ENCODE measurements at regions of chr17 and their contacts with region 1.

Region 1: DNA sequence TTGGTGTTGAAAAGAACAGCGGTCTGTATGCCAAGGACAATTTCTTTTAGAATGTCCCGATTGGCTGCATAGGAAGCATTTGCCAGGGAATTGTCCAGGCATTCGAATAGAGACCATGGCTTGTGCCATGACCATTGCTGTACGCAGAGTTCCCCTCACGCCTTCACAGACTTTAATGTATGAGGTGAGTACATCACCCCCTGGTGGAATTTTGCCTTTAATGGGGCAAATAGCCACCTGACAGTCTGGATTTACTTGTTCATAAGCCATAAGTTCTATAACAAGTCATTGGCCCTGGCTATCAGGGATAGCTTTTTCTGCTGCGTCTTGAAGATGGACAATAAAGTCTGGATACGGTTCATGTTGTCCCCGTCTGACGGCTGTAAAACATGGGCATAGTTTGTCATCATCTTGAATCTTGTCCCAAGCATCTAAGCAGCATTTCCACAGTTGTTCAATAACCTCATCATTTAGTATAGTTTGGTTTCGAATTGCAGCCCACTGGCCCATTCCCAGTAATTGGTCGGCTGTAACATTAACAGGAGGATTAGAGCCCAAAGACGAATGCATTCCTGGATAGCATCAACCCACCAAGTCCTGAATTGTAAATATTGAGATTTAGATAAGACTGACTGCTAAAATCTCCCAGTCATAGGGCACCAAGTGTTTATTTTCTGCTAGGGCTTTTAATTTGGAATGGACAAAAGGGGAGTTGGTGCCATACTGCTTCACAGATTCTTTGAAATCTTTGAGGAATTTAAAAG is 67.7 kb upstream of the ARL4D start:
- DNase-seq: peak in 1 of 2 donors; percentile 21
- H3K4me3 ChIP-seq: no peak overlapping the region
- CTCF ChIP-seq: no peak
- POLR2A ChIP-seq: no peak

Region 2: DNA sequence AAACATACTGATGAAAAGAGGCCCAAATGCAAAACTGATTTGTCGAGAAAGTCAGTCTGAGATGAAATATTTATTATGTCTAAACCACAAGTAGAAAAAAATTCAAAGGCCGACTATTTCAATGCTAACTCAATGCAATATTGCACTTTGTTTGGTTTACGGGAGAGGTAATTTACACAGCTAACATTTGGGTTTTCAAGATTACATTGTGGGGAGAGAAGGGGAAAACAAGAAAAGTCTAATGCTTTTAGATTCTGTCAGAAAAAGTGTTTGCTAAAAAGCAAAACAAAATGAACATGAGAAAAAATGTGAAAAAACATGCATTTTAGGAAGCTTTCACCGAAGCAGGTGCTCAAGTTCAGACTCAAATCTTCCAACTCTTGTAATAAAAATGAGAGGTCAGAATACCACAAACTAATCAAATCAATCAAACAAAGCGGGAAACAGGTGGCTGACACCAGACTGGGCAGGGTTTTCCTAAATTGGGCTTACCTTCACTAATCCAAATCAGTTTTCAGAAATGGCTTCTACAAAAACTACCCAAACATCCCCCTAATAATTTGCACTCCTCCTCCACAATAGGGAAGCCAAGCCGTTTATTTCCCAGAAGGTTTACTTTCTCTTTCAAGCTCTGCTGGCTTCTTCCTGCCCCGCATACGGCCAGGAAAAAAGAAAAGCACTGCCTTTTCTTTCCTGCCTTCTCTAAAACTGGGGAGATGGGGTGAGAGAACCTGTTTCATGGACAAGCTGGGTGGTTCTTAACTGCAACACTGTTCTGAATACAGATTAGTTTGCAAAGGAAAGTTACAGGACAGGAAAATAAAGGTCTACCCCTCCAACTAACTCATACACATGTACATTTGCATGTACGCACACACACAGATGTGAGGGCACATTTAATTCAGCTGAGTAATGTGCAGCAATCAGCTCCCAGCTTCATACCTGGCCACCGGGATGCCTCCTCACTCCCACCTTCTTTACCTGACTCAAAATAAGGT is 952.2 kb before region 1 on chr17:
- intact Hi-C with region 1: loop called (anchors 5 kb)
- DNase-seq: peak in 1 of 2 donors; percentile 45
- H3K4me3 ChIP-seq: no peak overlapping the region
- CTCF ChIP-seq: no peak
- POLR2A ChIP-seq: no peak

Region 3: GRCh38 chr17:43042025-43042628 is 288.9 kb before region 1 on chr17:
- intact Hi-C with region 1: no loop called
- DNase-seq: no peak
- H3K4me3 ChIP-seq: no peak overlapping the region
- CTCF ChIP-seq: no peak
- POLR2A ChIP-seq: no peak

Region 4: GRCh38 chr17:43393944-43394482 is 63.0 kb after region 1 on chr17:
- intact Hi-C with region 1: no loop called
- DNase-seq: peak; percentile 92 to 98
- H3K4me3 ChIP-seq: no peak overlapping the region
- CTCF ChIP-seq: peak in 1 of 3 donors; percentile 94
- POLR2A ChIP-seq: no peak

Region 5: DNA sequence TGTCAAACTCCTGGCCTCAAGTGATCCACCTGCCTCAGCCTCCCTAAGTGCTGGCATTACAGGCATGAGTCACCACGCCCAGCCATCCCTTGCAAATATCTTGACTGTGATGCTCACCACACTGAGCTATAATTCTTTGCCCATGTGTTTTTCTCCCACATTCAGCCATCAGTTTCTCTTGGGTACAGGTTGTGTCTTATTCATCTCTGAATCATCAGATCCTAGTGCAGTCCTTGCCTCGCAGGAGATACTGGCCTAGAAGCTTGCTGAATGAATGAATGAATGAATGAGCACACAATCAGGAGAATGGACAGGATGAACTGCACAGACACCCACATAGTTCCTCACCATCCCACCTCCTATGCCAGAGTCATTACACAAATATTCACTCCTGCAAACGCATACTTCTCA is 239.5 kb after region 1 on chr17:
- intact Hi-C with region 1: no loop called
- DNase-seq: no peak
- H3K4me3 ChIP-seq: no peak overlapping the region
- CTCF ChIP-seq: no peak
- POLR2A ChIP-seq: no peak

Region 6: DNA sequence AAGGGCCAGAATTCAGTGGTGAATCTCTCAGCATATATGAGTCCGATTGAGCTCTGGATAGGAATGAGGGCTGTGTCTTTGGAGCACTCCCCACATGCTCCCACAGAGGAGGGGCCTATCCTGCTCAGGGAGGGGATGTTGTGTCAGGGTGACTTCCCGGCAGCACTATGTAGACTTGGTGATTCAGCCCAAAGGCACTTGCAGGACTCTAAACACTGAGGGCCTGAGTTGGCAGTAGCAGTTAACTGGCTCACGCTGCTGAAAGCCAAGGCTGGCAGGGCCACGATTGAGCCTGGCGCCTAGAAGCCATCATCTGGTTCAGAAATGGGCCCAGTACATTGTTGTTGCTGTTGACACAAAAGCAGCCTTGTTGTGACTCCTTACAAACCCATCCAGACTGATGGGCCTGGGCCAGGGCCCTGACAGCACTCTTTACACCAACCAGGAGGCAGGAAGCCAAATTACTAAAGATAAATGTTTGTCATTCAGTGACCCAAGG is 1761.9 kb after region 1 on chr17:
- intact Hi-C with region 1: loop called (anchors 5 kb)
- DNase-seq: peak; percentile 84 to 95
- H3K4me3 ChIP-seq: no peak overlapping the region
- CTCF ChIP-seq: no peak
- POLR2A ChIP-seq: no peak

Measured in lower leg skin (tissue), 4 donors.